Calu3 (cell line): ENCODE measurements at regions of chr7 and their contacts with region 1.

Region 1: GRCh38 chr7:17031906-17032539 is 150.2 kb upstream of the AGR3 start:
- DNase-seq: peak; percentile 36
- H3K4me3 Mint-ChIP-seq: no peak overlapping the region
- H3K27ac Mint-ChIP-seq: peak overlapping the region; percentile 28
- H3K4me1 Mint-ChIP-seq: peaks cover 32% of the 10 kb centered on the region
- H3K27me3 Mint-ChIP-seq: no peaks in the 10 kb centered on the region
- CTCF ChIP-seq: no peak

Region 2: DNA sequence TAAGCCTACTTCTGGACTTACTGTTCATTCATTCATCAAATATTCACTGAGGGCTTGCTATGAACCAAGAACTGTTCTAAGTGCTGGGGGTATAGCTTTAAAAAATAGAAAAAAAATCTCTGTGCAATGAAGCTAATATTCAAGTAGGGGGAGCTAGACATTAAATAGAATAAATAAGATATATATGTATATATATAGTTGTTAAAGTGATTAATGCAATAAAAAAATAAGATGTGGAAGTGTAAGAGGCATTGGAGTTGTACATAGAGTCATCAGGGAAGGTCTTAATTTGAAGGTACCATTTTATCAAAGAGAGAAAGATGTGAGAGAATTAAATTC is 31.0 kb after region 1 on chr7:
- CTCF ChIA-PET with region 1: interaction called, 12 read pairs
- intact Hi-C with region 1: no loop called
- DNase-seq: no peak
- H3K4me3 Mint-ChIP-seq: no peak overlapping the region
- H3K27ac Mint-ChIP-seq: no peak overlapping the region
- H3K4me1 Mint-ChIP-seq: peaks cover 34% of the 10 kb centered on the region
- H3K27me3 Mint-ChIP-seq: no peaks in the 10 kb centered on the region
- CTCF ChIP-seq: peak; percentile 40